Activated CD4-positive, alpha-beta memory T cell treated with anti-CD3 and anti-CD28 coated beads for 36 hours (primary cell): ENCODE measurements at regions of chr7 and their contacts with region 1.

Region 1: GRCh38 chr7:156892821-156893706 is at the start of gene LMBR1:
- DNase-seq: peak; percentile 97
- H3K4me3 Mint-ChIP-seq: peak within 1 kb of the TSS; percentile 89
- H3K27ac Mint-ChIP-seq: peak within 1 kb of the TSS; percentile 91
- H3K4me1 Mint-ChIP-seq: peaks cover 41% of the 10 kb centered on the region
- H3K27me3 Mint-ChIP-seq: no peaks in the 10 kb centered on the region
- total RNA-seq, gene LMBR1: 36.6 to 37.8 TPM

Region 2: DNA sequence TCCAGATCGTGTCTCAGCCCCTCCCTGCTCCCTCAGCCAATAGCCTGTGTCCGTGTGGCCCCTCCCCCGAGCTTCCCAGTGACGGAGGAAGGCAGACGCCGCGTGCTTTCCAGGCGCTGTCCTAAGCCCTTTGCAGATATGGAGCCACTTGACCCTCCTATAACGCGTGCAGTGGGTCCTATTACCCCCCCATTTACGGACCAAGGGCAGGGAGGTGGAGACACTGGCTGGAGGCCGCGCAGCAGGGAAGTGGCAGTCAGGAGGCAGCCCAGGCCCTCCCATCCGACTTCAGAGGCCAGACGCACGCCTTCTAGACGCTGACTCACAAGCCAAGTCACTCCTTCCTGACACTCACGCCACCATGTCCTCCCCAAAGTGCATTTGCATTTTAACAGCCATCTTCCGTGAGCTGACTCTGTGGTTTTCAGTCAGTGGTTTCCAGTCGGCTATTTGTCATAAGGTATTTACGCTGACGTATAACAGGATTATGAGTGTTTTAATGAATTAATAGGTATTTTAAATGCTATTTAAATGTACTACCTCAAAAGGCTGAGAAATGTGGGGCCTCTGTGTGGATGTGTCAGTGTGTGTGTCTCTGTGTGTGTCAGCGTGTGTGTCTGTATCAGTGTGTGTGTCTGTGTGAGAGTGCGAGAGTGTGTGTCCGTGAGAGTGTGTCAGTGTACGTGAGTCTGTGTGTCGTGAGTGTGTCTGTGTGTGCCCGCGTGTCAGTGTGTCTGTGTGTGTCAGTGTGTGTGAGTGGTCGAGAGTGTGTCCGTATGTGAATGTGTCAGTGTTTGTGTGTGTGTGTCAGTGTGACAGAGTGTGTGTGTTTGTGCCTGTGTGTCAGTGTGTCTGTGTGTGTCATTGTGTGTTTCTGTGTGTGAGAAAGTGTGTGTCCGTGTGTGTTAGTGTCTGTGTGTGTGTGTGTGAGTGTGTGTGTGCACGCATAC is 1687.4 kb before region 1 on chr7:
- CTCF ChIA-PET with region 1: no interaction called
- POLR2A ChIA-PET with region 1: no interaction called
- intact Hi-C with region 1: loop called (anchors 5 kb)
- DNase-seq: peak; percentile 96
- H3K4me3 Mint-ChIP-seq: peak overlapping the region; percentile 75
- H3K27ac Mint-ChIP-seq: peak overlapping the region; percentile 100
- H3K4me1 Mint-ChIP-seq: peaks cover 45% of the 10 kb centered on the region
- H3K27me3 Mint-ChIP-seq: no peaks in the 10 kb centered on the region

Region 3: GRCh38 chr7:155644178-155644970 is 1248.7 kb before region 1 on chr7 and contains the start of gene RBM33:
- CTCF ChIA-PET with region 1: no interaction called
- POLR2A ChIA-PET with region 1: no interaction called
- intact Hi-C with region 1: loop called (anchors 1 kb)
- DNase-seq: peak; percentile 87
- H3K4me3 Mint-ChIP-seq: peak within 1 kb of the TSS; percentile 89
- H3K27ac Mint-ChIP-seq: peak within 1 kb of the TSS; percentile 94
- H3K4me1 Mint-ChIP-seq: peaks cover 40% of the 10 kb centered on the region
- H3K27me3 Mint-ChIP-seq: no peaks in the 10 kb centered on the region
- total RNA-seq, gene RBM33: 57.7 to 65.3 TPM

Region 4: GRCh38 chr7:156751319-156751718 is 141.7 kb before region 1 on chr7:
- CTCF ChIA-PET with region 1: no interaction called
- POLR2A ChIA-PET with region 1: no interaction called
- intact Hi-C with region 1: loop called (anchors 1 kb)
- DNase-seq: peak; percentile 79
- H3K4me3 Mint-ChIP-seq: no peak overlapping the region
- H3K27ac Mint-ChIP-seq: peak overlapping the region; percentile 11
- H3K4me1 Mint-ChIP-seq: peaks cover 14% of the 10 kb centered on the region
- H3K27me3 Mint-ChIP-seq: no peaks in the 10 kb centered on the region

Region 5: GRCh38 chr7:156811706-156812105 is 81.4 kb before region 1 on chr7:
- CTCF ChIA-PET with region 1: no interaction called
- POLR2A ChIA-PET with region 1: no interaction called
- intact Hi-C with region 1: no loop called
- DNase-seq: no peak
- H3K4me3 Mint-ChIP-seq: no peak overlapping the region
- H3K27ac Mint-ChIP-seq: no peak overlapping the region
- H3K4me1 Mint-ChIP-seq: no peaks in the 10 kb centered on the region
- H3K27me3 Mint-ChIP-seq: no peaks in the 10 kb centered on the region

Region 6: DNA sequence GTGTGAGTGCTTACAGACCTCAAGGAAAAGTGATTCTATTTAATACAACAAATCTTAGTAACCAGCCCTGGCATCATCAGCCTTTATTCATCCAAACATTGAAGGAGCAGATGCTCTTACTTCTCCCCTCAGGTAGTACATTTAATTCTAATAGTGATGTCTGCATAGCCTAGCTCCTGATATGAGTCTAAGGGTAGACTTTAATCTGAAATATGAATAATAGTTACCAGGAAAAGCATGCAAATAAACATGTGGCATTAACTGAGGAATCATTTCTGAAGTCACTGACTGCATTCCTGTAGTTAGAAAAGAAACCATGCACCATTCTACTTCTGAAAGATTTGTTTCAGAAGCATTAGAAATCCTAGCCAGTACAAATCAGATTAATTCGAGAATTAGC is 25.6 kb after region 1 on chr7:
- CTCF ChIA-PET with region 1: interaction called, 4 read pairs
- POLR2A ChIA-PET with region 1: interaction called, 7 read pairs
- intact Hi-C with region 1: loop called (anchors 1 kb)
- DNase-seq: no peak
- H3K4me3 Mint-ChIP-seq: no peak overlapping the region
- H3K27ac Mint-ChIP-seq: peak overlapping the region; percentile 71
- H3K4me1 Mint-ChIP-seq: peaks cover 42% of the 10 kb centered on the region
- H3K27me3 Mint-ChIP-seq: peaks cover 39% of the 10 kb centered on the region

Region 7: GRCh38 chr7:156949541-156950380 is 56.7 kb after region 1 on chr7 and contains the start of gene NOM1:
- CTCF ChIA-PET with region 1: interaction called, 16 read pairs
- POLR2A ChIA-PET with region 1: interaction called, 21 read pairs
- intact Hi-C with region 1: loop called (anchors 1 kb)
- DNase-seq: peak; percentile 93
- H3K4me3 Mint-ChIP-seq: peak within 1 kb of the TSS; percentile 87
- H3K27ac Mint-ChIP-seq: peak within 1 kb of the TSS; percentile 10
- H3K4me1 Mint-ChIP-seq: peaks cover 27% of the 10 kb centered on the region
- H3K27me3 Mint-ChIP-seq: peaks cover 9% of the 10 kb centered on the region
- total RNA-seq, gene NOM1: 29.2 to 31.3 TPM

Region 8: GRCh38 chr7:157336383-157337315 is 443.6 kb after region 1 on chr7 and contains the start of gene DNAJB6:
- CTCF ChIA-PET with region 1: no interaction called
- POLR2A ChIA-PET with region 1: no interaction called
- intact Hi-C with region 1: loop called (anchors 2 kb)
- DNase-seq: peak; percentile 96
- H3K4me3 Mint-ChIP-seq: peak within 1 kb of the TSS; percentile 96
- H3K27ac Mint-ChIP-seq: peak within 1 kb of the TSS; percentile 97
- H3K4me1 Mint-ChIP-seq: peaks cover 33% of the 10 kb centered on the region
- H3K27me3 Mint-ChIP-seq: peaks cover 3% of the 10 kb centered on the region
- total RNA-seq, gene DNAJB6: 90.7 to 97.2 TPM